ENCODE measurements at regions of chr2 and their contacts with region 1.

Region 1: DNA sequence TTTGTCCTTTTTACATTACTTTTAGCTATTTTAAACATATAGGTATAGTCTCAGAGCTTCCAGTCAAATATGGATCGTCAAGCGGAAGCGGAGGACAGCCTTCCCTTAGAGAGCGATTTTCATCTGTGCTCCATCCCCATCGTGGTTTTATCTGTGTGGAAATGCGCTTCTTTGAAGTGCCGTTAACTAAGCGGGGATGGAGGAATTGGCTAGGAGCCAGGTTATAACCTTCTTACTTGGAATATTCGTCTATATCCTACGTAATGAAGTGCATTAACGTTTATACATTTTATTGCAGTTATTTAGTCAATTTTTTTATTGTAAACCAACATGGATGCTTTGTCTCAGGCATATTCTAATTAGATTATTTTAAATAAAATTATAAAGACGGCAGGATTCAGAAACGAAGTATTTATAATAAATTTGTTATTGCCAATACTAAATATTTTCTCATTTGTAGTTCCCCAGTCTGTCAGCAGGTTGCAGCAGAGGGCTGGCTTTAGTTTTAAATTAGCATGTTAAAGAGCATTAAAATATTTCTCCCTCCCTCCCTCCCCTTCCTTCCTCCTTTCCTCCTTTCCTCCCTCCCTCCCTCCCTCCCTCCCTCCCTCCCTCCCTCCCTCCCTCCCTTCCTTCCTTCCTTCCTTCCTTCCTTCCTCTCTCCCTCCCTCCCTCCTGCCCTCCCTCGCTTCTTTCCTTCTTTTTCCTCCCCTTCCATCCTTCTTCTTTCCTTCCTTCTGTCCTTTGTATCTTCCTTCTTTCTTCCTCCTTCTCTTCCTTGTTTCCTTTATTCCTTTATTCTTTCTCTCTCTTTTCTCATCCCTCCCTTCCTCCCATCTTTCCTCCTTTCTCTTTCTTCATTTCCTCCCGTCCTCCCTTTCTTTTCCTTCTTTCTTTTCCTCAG is 80.6 kb upstream of the DOCK10 start:
- DNase-seq: peak in 28 of 42 donors; percentile 16 to 86 (median 48)

Region 2: DNA sequence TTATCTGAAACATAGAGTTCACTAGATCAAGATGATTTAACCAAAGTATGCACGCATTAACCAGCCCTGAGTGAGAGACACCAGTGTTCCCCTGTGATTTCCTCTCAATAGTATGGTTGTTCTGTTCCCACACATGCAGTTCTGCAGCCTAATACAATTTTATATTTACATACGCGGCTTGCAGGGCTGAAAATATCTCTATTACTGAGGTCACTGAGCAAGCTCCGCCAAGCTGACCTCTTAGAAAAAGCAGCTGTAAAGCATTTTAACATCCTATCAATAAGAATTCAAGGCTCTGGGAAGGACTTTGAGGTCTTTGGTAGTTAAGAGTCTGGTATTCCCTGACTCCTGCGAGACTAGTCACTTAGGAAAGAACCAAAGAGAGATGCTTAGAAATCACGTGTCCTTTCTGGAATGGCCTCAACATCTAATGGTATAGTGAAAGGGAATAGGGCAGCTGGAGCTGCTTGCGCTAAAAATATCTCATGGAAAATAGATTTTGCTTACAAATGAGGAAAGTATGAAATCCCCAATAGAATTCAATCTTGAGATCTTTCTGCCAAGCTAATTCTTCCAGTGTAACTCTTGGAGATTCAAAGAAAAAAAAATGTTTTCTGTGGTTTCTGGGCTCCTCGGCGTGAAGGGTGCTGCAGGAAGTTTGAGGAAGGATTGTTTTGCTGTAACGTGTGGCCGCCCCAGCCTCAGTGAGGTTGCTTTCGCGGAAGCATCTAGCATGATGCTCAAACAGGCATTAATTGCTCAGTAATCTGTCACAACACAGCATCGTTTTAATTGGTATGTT is 139.7 kb before region 1 on chr2:
- intact Hi-C with region 1: no loop called
- DNase-seq: peak in 14 of 42 donors; percentile 7 to 55 (median 30)

Region 3: GRCh38 chr2:225100856-225101294 is 22.0 kb before region 1 on chr2:
- intact Hi-C with region 1: no loop called
- DNase-seq: peak in 2 of 42 donors; percentile 11 to 19

Region 4: DNA sequence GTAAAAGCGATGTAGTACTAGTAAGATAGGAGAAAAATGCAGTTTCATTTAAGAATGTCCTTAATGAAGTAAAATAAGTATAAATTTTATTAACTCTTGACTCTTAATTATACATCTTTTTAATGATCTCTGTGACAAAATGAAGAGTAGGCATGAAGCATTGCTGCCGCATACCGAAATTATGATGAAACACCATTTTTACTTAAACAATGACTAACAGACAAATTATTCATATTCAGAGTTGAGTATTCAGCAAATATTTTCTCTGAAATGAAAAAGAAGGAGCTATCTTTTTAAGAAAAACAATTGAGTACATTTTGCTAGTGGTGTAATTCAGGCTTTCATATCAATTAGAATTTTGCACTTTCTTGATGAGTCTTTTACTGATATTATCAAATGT is 70.0 kb after region 1 on chr2:
- intact Hi-C with region 1: no loop called
- DNase-seq: no peak

Region 5: GRCh38 chr2:225660262-225661131 is 537.7 kb after region 1 on chr2:
- intact Hi-C with region 1: loop called (anchors 5 kb)
- DNase-seq: peak; percentile 66 to 95 (median 87)